Esophagus muscularis mucosa (tissue), 4 donors: ENCODE measurements at regions of chr17 and their contacts with region 1.

Region 1: GRCh38 chr17:76623271-76624146 is 20.0 kb downstream of the ST6GALNAC1 start:
- DNase-seq: no peak
- H3K4me3 ChIP-seq: no peak overlapping the region
- H3K27ac ChIP-seq: no peak overlapping the region
- H3K4me1 ChIP-seq: peaks cover 0 to 9% (median 5%) of the 10 kb centered on the region in 4 donors
- H3K27me3 ChIP-seq: no peaks in the 10 kb centered on the region
- CTCF ChIP-seq: peak in 2 of 3 experiments; percentile 94
- EP300 ChIP-seq: no peak
- POLR2A ChIP-seq: no peak

Region 2: GRCh38 chr17:76567634-76568432 is 55.7 kb before region 1 on chr17:
- intact Hi-C with region 1: loop called (anchors 5 kb)
- DNase-seq: no peak
- H3K4me3 ChIP-seq: no peak overlapping the region
- H3K27ac ChIP-seq: no peak overlapping the region
- H3K4me1 ChIP-seq: peaks cover 13 to 18% (median 16%) of the 10 kb centered on the region in 4 donors
- H3K27me3 ChIP-seq: peaks cover 0 to 15% (median 0%) of the 10 kb centered on the region in 4 donors
- CTCF ChIP-seq: no peak
- EP300 ChIP-seq: no peak
- POLR2A ChIP-seq: no peak

Region 3: DNA sequence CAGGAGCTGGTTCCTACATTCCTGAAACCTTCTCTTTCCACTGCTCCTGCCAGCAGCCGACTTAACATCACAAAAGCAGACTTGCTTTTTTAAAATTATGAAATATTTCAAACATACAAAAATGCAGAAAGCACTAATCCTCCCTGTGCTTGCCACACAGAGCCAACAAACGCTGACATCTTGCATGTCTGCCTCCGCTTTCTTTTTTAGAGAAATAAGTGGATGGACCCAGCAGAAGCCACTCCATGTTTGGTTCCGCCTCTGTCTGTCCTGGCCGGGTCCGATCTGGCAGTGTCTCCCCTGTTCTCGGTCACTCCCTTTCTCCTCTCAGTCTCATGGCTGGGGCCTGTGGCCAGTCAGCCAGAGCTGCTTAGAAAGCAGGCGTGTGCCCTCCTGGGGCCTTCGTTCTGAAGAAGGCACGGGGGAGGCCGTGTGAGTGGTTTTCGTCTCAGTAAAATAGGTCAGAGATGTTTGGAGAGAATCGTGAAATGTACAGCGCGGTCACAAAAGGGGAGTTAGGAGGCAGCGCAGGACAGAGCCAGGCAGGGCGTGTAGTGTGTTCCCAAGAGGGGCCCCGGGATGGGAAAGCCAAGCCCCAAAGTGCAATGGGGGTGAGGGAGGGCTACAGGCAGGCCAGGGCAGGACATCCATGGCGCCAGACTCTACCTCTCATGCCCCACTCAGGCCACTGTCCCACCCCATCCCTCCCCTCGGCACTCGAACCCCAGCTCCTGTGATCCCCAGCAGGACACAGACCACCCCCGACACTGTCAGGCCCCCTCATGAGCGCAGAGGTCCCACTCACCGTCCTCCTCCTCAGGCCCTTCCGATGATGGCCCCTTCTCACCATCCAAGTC is 64.0 kb after region 1 on chr17:
- intact Hi-C with region 1: no loop called
- DNase-seq: peak; percentile 95
- H3K4me3 ChIP-seq: peak overlapping the region in 3 of 4 donors; percentile 8 to 26 (median 20)
- H3K27ac ChIP-seq: peak overlapping the region; percentile 89 to 96 (median 92)
- H3K4me1 ChIP-seq: peaks cover 95 to 99% (median 99%) of the 10 kb centered on the region in 4 donors
- H3K27me3 ChIP-seq: no peaks in the 10 kb centered on the region
- CTCF ChIP-seq: no peak
- EP300 ChIP-seq: no peak
- POLR2A ChIP-seq: no peak